ENCODE measurements at regions of chr22 and their contacts with region 1.

Region 1: DNA sequence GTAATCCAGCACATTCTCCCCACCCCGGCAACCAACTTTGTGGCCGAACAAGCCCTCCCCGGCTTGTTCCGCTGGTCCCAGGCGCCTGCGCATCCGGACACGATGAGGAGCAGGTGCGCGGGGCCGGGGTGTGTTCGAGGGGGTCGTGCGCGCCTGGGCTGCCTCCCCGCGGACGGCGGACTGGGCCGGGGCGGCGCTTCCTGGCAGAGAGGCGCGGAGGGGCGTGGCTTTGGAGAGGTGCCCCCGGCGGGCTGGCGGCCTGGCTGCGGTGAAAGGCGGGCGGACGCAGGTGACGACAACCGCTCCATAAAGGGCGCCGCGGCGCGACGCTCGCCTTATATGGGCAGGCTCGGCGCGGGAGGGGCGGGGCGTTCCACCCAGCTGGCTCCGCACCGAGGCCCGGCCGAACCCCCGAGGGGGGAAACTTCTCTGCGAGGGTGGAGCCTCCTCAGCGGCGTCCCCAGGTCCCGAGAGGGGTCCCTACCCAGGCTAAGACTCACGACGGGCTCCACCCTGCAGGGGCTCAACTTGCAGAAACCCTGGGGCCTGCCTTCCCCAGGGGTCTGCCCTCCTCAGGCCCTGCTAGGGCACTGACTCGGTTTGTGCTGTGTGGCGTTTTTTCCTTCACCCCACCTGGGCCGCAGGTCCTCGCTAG is 26.4 kb downstream of the TXN2 start:
- DNase-seq: peak; percentile 88 to 99 (median 96)
- ATAC-seq: peak; percentile 71
- H3K4me3 ChIP-seq: peak overlapping the region; percentile 64 to 84
- H3K4me3 Mint-ChIP-seq: peak overlapping the region; percentile 79
- H3K27ac ChIP-seq: peak overlapping the region; percentile 91 to 96
- H3K27ac Mint-ChIP-seq: peak overlapping the region; percentile 90
- H3K4me1 ChIP-seq: peaks cover 51% of the 10 kb centered on the region
- H3K4me1 Mint-ChIP-seq: peaks cover 43% of the 10 kb centered on the region
- H3K27me3 ChIP-seq: no peaks in the 10 kb centered on the region
- H3K27me3 Mint-ChIP-seq: no peaks in the 10 kb centered on the region
- CTCF ChIP-seq: no peak

Region 2: DNA sequence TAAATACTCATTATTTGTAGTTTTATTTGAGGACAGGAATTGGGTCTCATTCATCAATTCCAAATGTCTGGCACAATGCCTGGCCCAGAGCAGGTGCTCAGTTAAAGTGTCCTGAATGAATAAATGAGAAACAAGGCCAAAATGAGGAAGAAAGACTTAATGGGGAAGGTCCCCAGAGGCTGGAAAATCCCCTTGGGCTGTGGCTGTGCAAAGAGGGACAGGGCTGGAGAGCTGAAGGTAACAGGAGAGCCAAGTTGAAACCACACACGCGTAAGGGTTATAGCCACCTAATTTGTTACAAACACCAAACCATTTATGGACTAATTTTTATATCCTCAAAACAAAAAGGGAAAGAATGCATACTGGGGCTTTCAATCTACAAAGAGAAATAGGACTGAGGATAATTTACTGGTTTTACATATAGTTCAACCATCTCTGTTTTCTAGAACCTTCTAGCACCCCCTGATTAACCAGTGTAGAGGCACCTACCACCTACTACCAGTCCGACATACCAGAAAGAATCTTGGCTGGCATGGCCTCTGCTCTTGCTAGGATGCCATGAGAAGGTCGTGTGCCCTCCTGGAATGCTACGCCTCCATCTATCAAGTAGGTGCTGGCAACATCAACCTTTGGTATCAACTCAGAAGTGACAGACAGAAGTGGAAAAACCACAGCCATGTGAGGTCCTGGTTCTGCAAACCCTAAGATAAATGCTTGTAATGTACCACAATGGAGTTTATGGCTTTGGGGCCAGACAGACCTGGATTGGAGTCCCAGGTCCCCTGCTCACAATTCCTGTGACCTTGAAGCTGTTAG is 95.7 kb before region 1 on chr22:
- CTCF ChIA-PET with region 1: no interaction called
- POLR2A ChIA-PET with region 1: interaction called, 4 read pairs
- intact Hi-C with region 1: loop called in 1 of 2 experiments (anchors 5 kb)
- DNase-seq: peak in 2 of 9 experiments; percentile 62 to 75
- ATAC-seq: no peak
- H3K4me3 ChIP-seq: no peak overlapping the region
- H3K4me3 Mint-ChIP-seq: peak overlapping the region; percentile 67
- H3K27ac ChIP-seq: peak overlapping the region in 1 of 2 experiments; percentile 77
- H3K27ac Mint-ChIP-seq: peak overlapping the region; percentile 92
- H3K4me1 ChIP-seq: peaks cover 97% of the 10 kb centered on the region
- H3K4me1 Mint-ChIP-seq: peaks cover 95% of the 10 kb centered on the region
- H3K27me3 ChIP-seq: no peaks in the 10 kb centered on the region
- H3K27me3 Mint-ChIP-seq: no peaks in the 10 kb centered on the region
- CTCF ChIP-seq: no peak

Region 3: GRCh38 chr22:36379593-36380361 is 75.3 kb before region 1 on chr22:
- CTCF ChIA-PET with region 1: interaction called, 7 read pairs
- POLR2A ChIA-PET with region 1: interaction called, 10 read pairs
- intact Hi-C with region 1: no loop called
- DNase-seq: peak in 7 of 9 experiments; percentile 58 to 81 (median 73)
- ATAC-seq: peak; percentile 33
- H3K4me3 ChIP-seq: peak overlapping the region; percentile 21 to 35
- H3K4me3 Mint-ChIP-seq: peak overlapping the region; percentile 79
- H3K27ac ChIP-seq: peak overlapping the region; percentile 70 to 85
- H3K27ac Mint-ChIP-seq: peak overlapping the region; percentile 99
- H3K4me1 ChIP-seq: peaks cover 89% of the 10 kb centered on the region
- H3K4me1 Mint-ChIP-seq: peaks cover 82% of the 10 kb centered on the region
- H3K27me3 ChIP-seq: no peaks in the 10 kb centered on the region
- H3K27me3 Mint-ChIP-seq: no peaks in the 10 kb centered on the region
- CTCF ChIP-seq: no peak

Region 4: DNA sequence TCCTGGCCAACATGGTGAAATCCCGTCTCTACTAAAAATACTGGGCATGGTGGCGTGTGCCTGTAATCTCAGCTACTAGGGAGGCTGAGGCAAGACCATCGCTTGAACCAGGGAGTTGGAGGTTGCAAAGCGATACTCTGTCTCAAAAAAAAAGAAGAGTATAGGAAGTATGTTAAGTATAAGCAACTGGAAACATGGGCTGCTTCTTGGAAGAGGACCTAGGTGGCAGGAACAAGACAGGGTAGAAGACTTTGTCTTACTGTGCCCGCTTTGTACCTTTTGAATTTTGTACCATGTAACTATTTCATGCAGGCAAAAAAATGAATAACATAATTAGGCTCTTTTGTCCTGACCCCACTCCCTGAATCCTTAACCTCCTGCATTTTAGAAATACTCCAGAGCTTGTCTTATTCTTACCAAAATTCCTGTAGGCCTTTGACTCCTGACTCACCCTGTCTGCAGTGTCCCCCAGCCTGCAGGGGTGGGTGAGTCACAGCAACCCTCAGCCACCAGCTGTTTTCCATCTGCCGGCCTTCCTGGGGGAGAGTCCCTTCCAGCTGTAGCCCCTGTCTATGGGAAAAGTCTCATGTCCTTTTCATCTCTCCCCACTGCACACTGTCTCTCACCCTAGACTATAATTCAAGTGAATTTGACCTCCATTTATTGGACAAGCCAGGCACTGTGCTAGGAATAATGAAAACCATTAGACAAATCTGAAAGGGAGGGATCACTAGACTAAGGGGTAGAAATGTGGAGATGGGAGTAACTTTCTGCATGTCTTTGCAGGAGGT is 15.4 kb before region 1 on chr22:
- CTCF ChIA-PET with region 1: interaction called, 3 read pairs
- POLR2A ChIA-PET with region 1: interaction called, 3 read pairs
- intact Hi-C with region 1: loop called (anchors 1 to 2 kb)
- DNase-seq: no peak
- ATAC-seq: no peak
- H3K4me3 ChIP-seq: no peak overlapping the region
- H3K4me3 Mint-ChIP-seq: no peak overlapping the region
- H3K27ac ChIP-seq: no peak overlapping the region
- H3K27ac Mint-ChIP-seq: no peak overlapping the region
- H3K4me1 ChIP-seq: peaks cover 40% of the 10 kb centered on the region
- H3K4me1 Mint-ChIP-seq: peaks cover 35% of the 10 kb centered on the region
- H3K27me3 ChIP-seq: no peaks in the 10 kb centered on the region
- H3K27me3 Mint-ChIP-seq: no peaks in the 10 kb centered on the region
- CTCF ChIP-seq: no peak

Region 5: DNA sequence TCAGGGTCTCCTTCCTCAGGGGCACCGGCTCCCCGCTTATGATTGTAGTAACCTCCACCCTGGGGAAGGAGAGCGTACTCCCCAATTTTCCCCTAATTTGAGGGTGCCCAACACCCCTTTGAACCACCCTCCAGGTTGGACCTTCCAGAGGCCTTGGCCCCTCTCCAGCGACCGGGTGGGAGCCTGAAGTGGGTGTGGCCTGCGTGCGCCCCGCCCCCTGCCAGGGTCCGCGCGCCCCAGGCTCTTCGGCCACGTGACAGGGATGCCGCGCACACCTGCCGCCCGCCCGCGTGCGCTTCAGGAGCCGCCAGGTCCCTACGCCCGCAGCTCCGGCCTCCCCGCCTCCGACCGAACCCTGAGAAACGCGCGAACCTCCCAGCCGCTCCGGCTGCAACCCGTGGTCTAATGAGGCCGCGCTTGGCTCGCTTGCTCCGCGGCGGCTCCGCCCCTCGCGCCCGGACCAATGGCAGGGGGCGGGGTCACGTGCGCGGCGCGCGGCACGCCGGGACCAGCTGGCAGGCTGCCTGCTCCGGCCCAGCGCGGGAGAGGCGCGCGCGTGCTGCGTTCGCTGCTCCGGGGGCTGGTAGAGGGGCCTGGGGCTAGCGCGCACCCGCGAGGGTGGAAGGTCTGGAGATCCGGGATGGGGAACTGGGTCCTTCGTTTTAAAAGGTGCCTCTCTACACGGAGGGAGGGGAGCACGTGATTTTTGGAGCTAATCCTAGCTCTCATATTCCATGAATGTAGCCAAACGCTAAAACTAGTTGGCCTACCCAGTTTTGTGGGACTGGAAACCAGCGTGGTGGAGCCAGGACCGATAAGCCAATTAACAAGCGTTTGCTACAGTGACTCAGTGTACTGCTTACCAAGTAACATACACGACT is 51.8 kb after region 1 on chr22 and contains the start of gene FOXRED2:
- CTCF ChIA-PET with region 1: no interaction called
- POLR2A ChIA-PET with region 1: no interaction called
- intact Hi-C with region 1: loop called in 1 of 2 experiments (anchors 1 kb)
- DNase-seq: peak; percentile 77 to 94 (median 88)
- ATAC-seq: peak; percentile 94
- H3K4me3 ChIP-seq: peak within 1 kb of the TSS; percentile 53 to 82
- H3K4me3 Mint-ChIP-seq: peak within 1 kb of the TSS; percentile 73
- H3K27ac ChIP-seq: peak within 1 kb of the TSS; percentile 41 to 62
- H3K27ac Mint-ChIP-seq: peak within 1 kb of the TSS; percentile 55
- H3K4me1 ChIP-seq: peaks cover 16% of the 10 kb centered on the region
- H3K4me1 Mint-ChIP-seq: peaks cover 13% of the 10 kb centered on the region
- H3K27me3 ChIP-seq: no peaks in the 10 kb centered on the region
- H3K27me3 Mint-ChIP-seq: no peaks in the 10 kb centered on the region
- CTCF ChIP-seq: no peak
- total RNA-seq, gene FOXRED2: 2.1 TPM

Measured in CD8-positive, alpha-beta T cell (primary cell).